ENCODE measurements at regions of chr21 and their contacts with region 1.

Region 1: DNA sequence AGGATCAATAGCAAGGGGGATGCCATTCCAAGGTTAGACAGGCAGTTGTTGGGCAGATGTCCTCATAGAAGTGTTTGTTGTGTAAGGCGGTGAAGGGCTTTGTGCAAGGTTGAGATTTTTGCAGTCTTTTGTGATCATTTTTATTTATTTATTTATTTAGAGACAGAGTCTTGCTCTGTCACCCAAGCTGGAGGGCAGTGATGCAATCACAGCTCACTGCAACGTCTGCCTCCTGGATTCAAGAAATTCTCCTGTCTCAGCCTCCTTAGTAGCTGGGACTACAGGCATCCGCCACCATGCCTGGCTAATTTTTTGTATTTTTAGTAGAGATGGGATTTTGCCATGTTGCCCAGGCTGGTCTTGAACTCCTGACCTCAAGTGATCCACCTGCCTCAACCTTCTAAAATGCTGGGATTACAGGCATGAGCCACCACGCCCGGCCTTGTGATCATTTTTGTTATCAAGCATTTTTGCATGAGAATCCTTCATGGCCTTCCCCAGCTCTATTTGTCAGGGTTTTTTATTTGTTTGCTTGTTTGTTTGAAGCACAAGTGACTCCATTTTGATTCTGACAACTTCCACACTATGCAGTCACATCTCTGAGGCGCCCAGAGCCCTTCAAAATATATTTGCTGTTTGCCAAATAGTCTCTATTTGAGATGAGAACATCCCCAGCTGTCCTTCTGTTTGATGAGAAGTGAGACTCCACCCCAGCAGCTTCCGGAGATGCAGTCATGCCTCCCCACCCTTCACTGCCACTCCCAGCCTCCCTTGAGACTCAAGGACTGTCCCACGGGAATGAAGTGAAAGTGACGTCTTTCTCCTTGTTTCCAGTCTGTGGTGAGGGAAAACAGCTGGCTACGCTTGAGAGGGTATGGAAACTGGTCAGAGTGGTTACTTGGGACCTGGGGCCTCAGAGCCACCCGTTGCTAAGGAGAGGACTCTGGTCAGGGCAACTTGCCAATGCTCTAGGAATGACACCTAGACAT is 38.0 kb downstream of the TMEM50B start:
- DNase-seq: peak; percentile 37 to 85
- ATAC-seq: peak; percentile 46 to 83 (median 73)
- H3K4me3 ChIP-seq: no peak overlapping the region
- H3K27ac ChIP-seq: peak overlapping the region in 8 of 10 donors; percentile 8 to 74 (median 57)
- H3K4me1 ChIP-seq: peaks cover 0 to 34% (median 20%) of the 10 kb centered on the region in 9 donors
- H3K27me3 ChIP-seq: no peaks in the 10 kb centered on the region
- CTCF ChIP-seq: no peak

Region 2: DNA sequence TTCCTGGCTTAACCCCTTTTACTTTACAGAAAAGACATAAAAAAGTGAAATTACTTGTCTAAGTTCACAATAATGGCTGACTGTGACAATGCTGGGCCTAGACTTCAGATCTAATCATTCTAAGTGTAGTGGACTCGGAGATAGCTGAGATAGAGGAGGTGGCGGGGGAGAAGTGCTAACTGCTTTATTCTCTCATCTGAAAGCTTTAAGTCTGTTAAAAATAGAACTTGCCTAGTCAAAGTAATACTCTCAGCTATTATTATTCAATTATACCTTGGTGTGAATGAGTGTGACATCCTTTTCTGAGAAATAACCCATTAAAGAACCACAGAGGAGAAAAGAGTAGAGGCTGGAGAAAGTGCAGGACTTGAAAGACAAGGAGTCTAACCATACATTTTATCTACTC is 512.1 kb before region 1 on chr21:
- intact Hi-C with region 1: loop called in 1 of 10 experiments (anchors 10 kb)
- DNase-seq: no peak
- ATAC-seq: no peak
- H3K4me3 ChIP-seq: no peak overlapping the region
- H3K27ac ChIP-seq: no peak overlapping the region
- H3K4me1 ChIP-seq: peaks cover 0 to 6% (median 0%) of the 10 kb centered on the region in 9 donors
- H3K27me3 ChIP-seq: no peaks in the 10 kb centered on the region
- CTCF ChIP-seq: no peak

Region 3: GRCh38 chr21:33360881-33361602 is 80.7 kb before region 1 on chr21:
- intact Hi-C with region 1: loop called in 4 of 10 experiments (anchors 5 to 10 kb)
- DNase-seq: peak; percentile 77 to 82
- ATAC-seq: peak; percentile 81 to 92 (median 86)
- H3K4me3 ChIP-seq: peak overlapping the region in 9 of 10 donors; percentile 7 to 50 (median 44)
- H3K27ac ChIP-seq: peak overlapping the region in 9 of 10 donors; percentile 43 to 89 (median 60)
- H3K4me1 ChIP-seq: peaks cover 0 to 54% (median 23%) of the 10 kb centered on the region in 9 donors
- H3K27me3 ChIP-seq: no peaks in the 10 kb centered on the region
- CTCF ChIP-seq: peak; percentile 72 to 87 (median 84)

Region 4: DNA sequence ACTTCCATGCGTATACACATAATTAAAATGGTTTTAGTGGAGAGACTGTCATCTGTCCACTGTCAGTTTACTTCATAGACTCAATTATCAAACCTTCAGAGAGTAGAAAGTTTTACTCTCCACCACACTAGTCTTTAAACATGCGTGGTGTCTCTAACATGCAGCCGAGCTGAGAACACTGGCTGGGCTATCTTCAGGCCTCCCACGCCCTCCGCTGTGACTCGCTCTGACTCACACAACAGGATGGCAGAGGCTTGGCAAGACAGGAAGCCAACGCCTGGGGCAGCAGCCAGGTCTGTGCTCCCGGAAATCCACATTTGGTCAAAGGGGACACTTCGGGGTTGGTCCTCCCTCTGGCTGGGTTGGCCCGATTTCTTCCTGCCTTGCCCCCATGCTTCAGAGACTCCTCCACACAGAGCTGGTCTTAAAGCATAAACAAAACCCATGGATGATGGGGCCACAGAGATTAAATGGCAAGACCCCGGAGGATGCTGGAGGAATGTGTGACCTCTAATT is 61.2 kb before region 1 on chr21:
- intact Hi-C with region 1: loop called in 2 of 10 experiments (anchors 10 kb)
- DNase-seq: peak; percentile 85 to 93
- ATAC-seq: peak; percentile 95 to 98 (median 96)
- H3K4me3 ChIP-seq: peak overlapping the region in 2 of 10 donors; percentile 3 to 6
- H3K27ac ChIP-seq: peak overlapping the region in 9 of 10 donors; percentile 57 to 92 (median 80)
- H3K4me1 ChIP-seq: peaks cover 0 to 67% (median 28%) of the 10 kb centered on the region in 9 donors
- H3K27me3 ChIP-seq: no peaks in the 10 kb centered on the region
- CTCF ChIP-seq: peak in 1 of 9 donors; percentile 7

Measured in heart right ventricle (tissue), 16 donors.